Activated CD4-positive, alpha-beta T cell treated with anti-CD3 and anti-CD28 coated beads for 36 hours (primary cell): ENCODE measurements at regions of chr4 and their contacts with region 1.

Region 1: GRCh38 chr4:102007959-102008425 is 217.5 kb downstream of the BANK1 start:
- DNase-seq: peak; percentile 20
- ATAC-seq: peak; percentile 95
- H3K4me3 Mint-ChIP-seq: no peak overlapping the region
- H3K27ac Mint-ChIP-seq: no peak overlapping the region
- H3K4me1 Mint-ChIP-seq: peaks cover 15% of the 10 kb centered on the region
- H3K27me3 Mint-ChIP-seq: peaks cover 2% of the 10 kb centered on the region

Region 2: GRCh38 chr4:100017637-100018310 is 1990.2 kb before region 1 on chr4:
- CTCF ChIA-PET with region 1: no interaction called
- POLR2A ChIA-PET with region 1: no interaction called
- intact Hi-C with region 1: loop called in 1 of 2 experiments (anchors 5 kb)
- DNase-seq: peak; percentile 11
- ATAC-seq: peak; percentile 96
- H3K4me3 Mint-ChIP-seq: no peak overlapping the region
- H3K27ac Mint-ChIP-seq: no peak overlapping the region
- H3K4me1 Mint-ChIP-seq: peaks cover 11% of the 10 kb centered on the region
- H3K27me3 Mint-ChIP-seq: peaks cover 11% of the 10 kb centered on the region

Region 3: DNA sequence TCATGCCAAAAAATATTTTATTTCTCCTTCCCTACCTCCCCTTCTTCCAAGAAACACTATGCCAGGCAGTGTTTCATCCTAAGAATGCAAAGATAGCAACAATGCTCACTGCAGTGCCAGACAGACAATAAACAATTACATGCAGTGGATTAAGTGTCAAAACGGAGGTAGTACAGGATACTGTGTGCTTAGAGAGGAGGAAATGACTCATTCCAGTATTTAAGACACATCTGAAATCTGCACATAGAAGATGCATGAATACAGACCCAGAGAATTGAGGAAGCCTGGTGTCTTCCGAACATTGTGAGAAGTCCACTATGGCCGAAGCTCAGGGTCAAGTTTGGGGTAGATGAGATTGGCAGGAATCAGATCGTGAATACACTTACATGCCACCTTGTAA is 987.0 kb before region 1 on chr4:
- CTCF ChIA-PET with region 1: no interaction called
- POLR2A ChIA-PET with region 1: no interaction called
- intact Hi-C with region 1: loop called in 1 of 2 experiments (anchors 5 kb)
- DNase-seq: no peak
- ATAC-seq: peak; percentile 70
- H3K4me3 Mint-ChIP-seq: no peak overlapping the region
- H3K27ac Mint-ChIP-seq: peak overlapping the region; percentile 64
- H3K4me1 Mint-ChIP-seq: peaks cover 50% of the 10 kb centered on the region
- H3K27me3 Mint-ChIP-seq: no peaks in the 10 kb centered on the region

Region 4: DNA sequence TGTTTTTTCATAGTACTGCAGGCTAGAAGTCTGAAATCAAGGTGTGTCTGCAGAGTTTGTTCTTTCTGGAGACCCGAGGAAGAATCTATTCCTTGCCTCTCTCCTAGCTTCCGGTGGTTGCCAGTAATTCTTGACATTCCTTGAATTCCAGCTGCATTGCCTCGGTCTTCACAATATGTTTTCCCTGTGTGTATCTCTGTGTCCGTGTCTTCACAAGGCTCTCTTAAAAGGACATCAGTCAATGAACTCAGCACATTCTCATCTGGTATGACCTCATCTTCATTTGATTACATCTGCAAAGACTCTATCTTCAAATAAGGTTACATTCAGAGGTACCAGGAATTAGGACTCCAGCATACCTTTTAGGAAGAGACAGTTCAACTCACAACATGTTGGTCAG is 54.0 kb before region 1 on chr4:
- CTCF ChIA-PET with region 1: no interaction called
- POLR2A ChIA-PET with region 1: no interaction called
- intact Hi-C with region 1: no loop called
- DNase-seq: no peak
- ATAC-seq: no peak
- H3K4me3 Mint-ChIP-seq: no peak overlapping the region
- H3K27ac Mint-ChIP-seq: no peak overlapping the region
- H3K4me1 Mint-ChIP-seq: no peaks in the 10 kb centered on the region
- H3K27me3 Mint-ChIP-seq: no peaks in the 10 kb centered on the region

Region 5: DNA sequence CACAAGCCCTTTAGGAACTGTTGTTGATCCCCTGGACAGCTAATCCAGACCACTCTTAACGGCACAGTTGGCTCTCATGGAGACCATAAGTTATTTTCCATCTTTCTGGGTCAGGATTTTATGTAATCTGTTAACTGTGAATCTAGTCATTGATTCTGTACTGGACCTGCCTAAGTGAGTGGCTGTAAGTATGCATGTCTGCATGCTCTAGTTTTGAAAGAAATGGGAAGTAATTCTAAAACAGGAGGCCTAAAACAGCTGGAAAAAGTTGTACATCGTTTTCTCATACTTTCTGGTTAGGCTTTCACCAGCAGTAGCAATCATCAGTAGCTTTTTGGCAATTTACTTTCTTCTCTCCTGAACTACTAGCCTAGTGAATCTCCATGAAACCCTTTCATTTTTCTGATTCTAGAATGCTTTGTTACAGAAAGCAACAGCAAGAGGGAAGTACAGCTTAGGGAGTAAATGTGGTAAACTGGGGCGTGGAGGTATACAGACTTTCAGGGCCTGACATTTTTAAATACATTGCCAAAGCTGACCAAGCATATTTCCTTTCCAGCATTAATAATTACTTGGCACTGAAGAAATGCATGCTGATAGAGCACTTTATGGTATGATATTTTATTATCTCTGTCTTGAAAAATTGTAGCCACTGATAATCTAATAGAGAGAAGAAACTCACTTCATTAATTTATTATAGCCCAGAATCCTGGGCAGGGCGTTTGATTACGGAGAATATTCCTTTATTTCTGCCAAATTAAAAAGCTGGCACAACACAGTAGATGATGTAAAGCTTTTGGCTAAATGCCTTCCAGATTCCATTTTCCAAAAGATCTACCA is 14.8 kb before region 1 on chr4:
- CTCF ChIA-PET with region 1: no interaction called
- POLR2A ChIA-PET with region 1: no interaction called
- intact Hi-C with region 1: no loop called
- DNase-seq: no peak
- ATAC-seq: no peak
- H3K4me3 Mint-ChIP-seq: no peak overlapping the region
- H3K27ac Mint-ChIP-seq: no peak overlapping the region
- H3K4me1 Mint-ChIP-seq: no peaks in the 10 kb centered on the region
- H3K27me3 Mint-ChIP-seq: peaks cover 2% of the 10 kb centered on the region

Region 6: DNA sequence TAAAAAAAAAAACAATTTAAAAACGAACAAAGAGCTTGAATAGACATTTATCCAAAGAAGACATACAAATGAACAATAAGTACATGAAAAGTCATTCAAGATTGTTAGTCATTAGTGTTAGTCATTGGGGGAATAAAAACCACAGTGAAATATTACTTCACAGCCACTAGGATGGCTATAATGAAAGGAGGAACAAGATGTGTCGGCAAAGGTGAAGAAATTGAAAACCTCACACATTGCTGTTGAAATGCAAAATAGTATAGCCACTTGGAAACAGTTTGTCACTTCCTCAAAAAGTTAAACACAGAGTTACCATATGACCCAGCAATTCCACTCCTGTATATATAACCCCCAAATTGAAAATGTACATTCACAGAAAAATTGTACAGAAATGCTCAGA is 382.4 kb after region 1 on chr4:
- CTCF ChIA-PET with region 1: no interaction called
- POLR2A ChIA-PET with region 1: no interaction called
- intact Hi-C with region 1: loop called in 1 of 2 experiments (anchors 2 kb)
- DNase-seq: no peak
- ATAC-seq: peak; percentile 98
- H3K4me3 Mint-ChIP-seq: no peak overlapping the region
- H3K27ac Mint-ChIP-seq: no peak overlapping the region
- H3K4me1 Mint-ChIP-seq: peaks cover 18% of the 10 kb centered on the region
- H3K27me3 Mint-ChIP-seq: peaks cover 13% of the 10 kb centered on the region